ENCODE measurements at regions of chr10 and their contacts with region 1.

Region 1: GRCh38 chr10:14905890-14906289 is 27.2 kb downstream of the SUV39H2 start:
- DNase-seq: no peak
- H3K4me3 Mint-ChIP-seq: no peak overlapping the region
- H3K27ac Mint-ChIP-seq: no peak overlapping the region
- H3K4me1 Mint-ChIP-seq: peaks cover 10% of the 10 kb centered on the region
- H3K27me3 Mint-ChIP-seq: no peaks in the 10 kb centered on the region

Region 2: DNA sequence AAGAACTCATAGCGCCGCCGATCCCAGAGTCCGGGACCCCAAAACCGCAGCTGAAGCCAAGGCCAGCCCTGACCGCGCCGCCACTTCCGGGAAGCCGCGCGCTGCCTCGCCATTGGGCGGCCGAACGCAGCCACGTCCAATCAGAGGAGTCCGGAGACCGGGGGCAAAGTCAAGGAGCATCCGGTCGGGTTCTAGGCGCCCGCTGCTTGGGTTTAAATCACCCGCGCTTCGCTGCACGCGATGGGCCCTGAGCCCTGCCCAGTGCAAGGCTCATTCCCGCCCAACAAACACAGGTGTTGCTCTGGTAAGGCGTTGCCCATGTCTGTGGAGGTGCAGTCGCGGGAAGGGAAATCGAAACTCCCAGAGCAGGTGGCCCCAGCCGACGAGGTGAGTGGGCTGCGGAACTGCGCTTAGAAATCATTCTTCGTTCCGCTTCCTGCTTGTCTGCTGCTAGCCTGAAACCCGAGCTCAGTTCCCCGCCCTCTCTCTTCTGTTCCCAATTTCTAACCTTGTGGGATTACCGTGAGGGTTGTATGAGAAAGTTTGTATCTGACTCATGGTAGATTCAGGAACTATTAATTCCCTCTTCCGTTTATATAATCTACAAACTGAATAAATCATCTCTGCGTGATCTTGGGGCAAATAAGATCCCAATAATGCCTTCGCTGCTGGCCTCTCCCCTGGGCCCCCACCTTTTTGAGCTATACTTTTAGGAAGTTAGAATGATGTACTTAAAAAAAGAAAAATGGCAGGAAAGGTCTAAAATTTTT is 48.3 kb after region 1 on chr10 and contains the start of gene DCLRE1C:
- CTCF ChIA-PET with region 1: no interaction called
- POLR2A ChIA-PET with region 1: interaction called, 5 read pairs
- intact Hi-C with region 1: loop called (anchors 5 kb)
- DNase-seq: peak; percentile 93
- H3K4me3 Mint-ChIP-seq: peak within 1 kb of the TSS; percentile 91
- H3K27ac Mint-ChIP-seq: peak within 1 kb of the TSS; percentile 96
- H3K4me1 Mint-ChIP-seq: peaks cover 47% of the 10 kb centered on the region
- H3K27me3 Mint-ChIP-seq: no peaks in the 10 kb centered on the region
- total RNA-seq, gene DCLRE1C: 17.2 to 18.3 TPM

Measured in activated CD4-positive, alpha-beta memory T cell treated with anti-CD3 and anti-CD28 coated beads for 36 hours (primary cell).